ENCODE measurements at regions of chr16 and their contacts with region 1.

Region 1: DNA sequence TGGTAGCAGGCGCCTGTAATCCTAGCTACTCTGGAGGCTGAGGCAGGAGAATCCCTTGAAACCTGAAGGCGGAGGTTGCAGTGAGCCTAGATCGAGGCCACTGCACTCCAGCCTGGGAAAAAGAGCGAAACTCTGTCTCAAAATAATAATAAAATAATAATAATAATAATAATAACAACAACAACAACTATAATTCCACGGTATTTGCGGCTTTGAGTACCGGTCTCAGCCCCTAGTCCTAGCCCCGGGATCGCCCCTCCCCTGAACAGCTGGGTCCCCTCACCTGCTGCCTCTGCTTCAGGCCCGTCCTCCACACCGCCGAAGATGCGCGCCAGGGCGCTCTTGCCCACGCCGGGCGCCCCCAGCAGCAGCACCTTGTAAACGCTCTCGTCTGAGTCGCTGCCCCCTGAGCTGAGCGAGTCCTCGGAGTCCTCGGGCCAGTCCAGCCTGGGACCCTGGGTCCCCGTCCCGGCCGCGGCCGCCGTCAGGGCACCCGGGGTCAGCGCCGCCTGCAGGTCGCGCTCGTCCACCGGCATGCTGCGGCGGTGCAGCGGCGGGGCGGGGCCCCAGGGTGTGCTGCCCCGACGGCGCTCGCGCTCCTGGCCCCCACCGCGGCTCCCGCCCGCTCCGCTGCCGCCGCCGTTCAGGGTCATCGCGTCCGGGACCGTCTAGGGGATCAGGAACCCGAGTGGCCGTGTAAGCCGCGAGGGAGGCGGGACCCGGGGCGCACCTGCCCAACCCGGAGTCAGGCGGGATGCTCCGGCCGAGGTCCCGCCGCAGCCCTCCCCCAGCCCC is 611 bp downstream of the RRAD start:
- DNase-seq: peak in 1 of 2 donors; percentile 62
- ATAC-seq: peak in 4 of 8 donors; percentile 11 to 18 (median 16)
- H3K4me3 ChIP-seq: peak overlapping the region; percentile 44 to 79 (median 68)
- H3K27ac ChIP-seq: peak overlapping the region; percentile 77 to 97 (median 90)
- H3K4me1 ChIP-seq: peaks cover 10 to 89% (median 39%) of the 10 kb centered on the region in 9 donors
- H3K27me3 ChIP-seq: peaks cover 0 to 63% (median 21%) of the 10 kb centered on the region in 7 donors
- CTCF ChIP-seq: peak in 7 of 9 donors; percentile 24 to 61 (median 34)

Region 2: DNA sequence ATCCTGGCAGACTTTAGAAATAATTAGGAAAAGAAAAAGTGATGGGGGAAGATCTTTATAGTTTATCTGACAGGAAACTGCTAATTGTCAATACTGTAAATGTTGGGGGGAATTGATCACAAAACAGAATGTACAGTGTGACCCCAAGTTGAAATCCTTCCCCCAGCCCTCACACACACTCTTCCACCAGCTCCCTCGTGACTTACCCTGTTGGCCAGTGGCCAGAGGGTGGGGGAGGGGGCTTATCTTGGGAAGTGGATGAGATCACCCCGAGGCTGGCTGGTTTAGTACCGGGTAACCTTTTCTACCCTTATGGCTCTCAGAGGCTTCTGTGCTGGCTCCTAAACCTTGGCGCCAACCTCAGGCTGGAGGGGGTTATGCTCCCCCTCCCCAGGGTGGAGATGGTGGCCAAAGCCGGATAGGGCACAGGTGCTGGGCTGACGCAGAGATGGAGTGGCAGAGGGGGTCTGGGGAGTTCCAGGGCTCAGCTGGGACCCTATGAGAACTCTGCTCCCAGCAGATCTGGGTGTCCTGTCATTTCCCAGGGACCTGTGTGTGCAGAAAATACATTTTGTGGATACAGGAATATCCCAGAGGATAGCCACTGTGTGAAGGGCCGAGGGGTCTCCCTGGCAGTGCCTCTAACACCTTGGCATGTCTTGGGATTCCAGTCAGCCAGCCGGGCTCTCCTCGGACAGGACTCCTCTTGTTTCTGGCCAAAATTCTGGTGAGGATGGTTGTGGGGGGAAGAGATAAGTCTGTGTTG is 24.6 kb before region 1 on chr16:
- intact Hi-C with region 1: loop called in 6 of 10 experiments (anchors 1 to 2 kb)
- DNase-seq: peak; percentile 81 to 83
- ATAC-seq: peak; percentile 6 to 41 (median 20)
- H3K4me3 ChIP-seq: no peak overlapping the region
- H3K27ac ChIP-seq: peak overlapping the region; percentile 72 to 99 (median 94)
- H3K4me1 ChIP-seq: peaks cover 23 to 84% (median 58%) of the 10 kb centered on the region in 9 donors
- H3K27me3 ChIP-seq: no peaks in the 10 kb centered on the region
- CTCF ChIP-seq: no peak

Region 3: DNA sequence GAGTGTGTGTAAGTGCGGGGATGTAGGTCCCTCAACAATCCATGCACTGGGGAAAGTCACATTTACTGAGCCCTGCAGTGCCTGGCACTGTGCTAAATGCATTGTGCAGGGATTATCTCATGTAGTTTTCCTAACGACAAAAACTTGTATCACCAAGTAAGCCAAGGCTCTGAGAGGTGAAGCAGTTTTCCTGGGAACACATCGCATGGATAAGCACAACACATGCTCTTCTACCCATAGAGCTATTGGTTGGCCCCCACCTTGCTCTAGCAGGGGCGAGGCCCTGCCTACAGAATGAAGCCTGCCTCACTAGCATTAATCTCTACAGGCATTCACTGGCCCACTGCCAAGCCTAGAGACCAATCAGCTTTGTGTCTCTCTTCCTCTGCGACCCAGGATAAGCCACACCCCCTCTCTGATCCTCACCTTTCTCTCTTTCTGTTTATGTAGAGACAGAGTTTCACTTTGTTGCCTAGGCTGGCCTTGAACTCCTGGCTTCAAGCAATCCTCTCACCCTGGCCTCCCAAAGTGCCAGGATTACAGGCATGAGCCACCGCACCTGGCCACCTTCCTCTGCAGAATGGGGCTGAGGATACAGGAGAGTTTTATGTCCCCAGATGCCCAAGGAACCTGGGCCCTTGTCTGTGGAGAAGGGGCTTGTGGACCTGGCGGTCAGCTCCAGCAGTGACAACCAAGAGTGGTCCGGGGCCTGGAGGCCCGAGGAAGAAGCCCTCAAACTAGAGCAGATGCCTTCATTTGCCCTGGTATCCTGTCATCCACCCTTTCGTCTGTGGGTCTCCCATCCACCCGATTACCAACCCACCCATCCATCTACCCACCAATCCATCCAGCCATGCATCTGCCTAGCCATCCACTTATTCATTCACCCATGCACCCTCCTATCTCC is 18.8 kb before region 1 on chr16:
- intact Hi-C with region 1: loop called in 5 of 10 experiments (anchors 1 to 2 kb)
- DNase-seq: peak; percentile 62 to 88
- ATAC-seq: peak; percentile 1 to 51 (median 32)
- H3K4me3 ChIP-seq: peak overlapping the region in 4 of 10 donors; percentile 32 to 49 (median 42)
- H3K27ac ChIP-seq: peak overlapping the region; percentile 76 to 99 (median 95)
- H3K4me1 ChIP-seq: peaks cover 17 to 78% (median 44%) of the 10 kb centered on the region in 9 donors
- H3K27me3 ChIP-seq: no peaks in the 10 kb centered on the region
- CTCF ChIP-seq: no peak